ENCODE measurements at regions of chr1 and their contacts with region 1.

Region 1: GRCh38 chr1:7667625-7668218 is 103.4 kb upstream of the VAMP3 start:
- DNase-seq: peak; percentile 87
- CTCF ChIP-seq: peak; percentile 100

Region 2: DNA sequence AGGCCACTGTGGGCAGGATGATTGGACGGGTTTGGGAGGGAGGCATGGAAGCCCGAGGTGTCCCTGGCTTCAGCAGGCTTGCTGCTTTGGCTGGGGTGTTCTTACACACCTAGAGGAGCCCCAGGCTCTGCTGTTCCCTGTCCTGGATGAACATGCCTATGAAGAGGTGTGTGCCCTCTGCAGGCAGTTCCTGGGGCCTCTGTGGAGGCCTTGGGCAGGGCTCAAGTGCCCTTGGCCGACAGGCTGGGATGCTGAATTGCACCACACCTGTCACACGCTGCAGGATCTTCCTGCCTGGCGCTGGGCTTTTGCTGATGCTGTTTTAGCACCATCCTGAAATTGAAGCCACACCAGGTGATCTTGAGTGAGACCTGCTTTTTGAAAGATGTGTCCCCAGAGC is 311.6 kb before region 1 on chr1:
- CTCF ChIA-PET with region 1: no interaction called
- POLR2A ChIA-PET with region 1: no interaction called
- DNase-seq: no peak
- CTCF ChIP-seq: no peak

Region 3: DNA sequence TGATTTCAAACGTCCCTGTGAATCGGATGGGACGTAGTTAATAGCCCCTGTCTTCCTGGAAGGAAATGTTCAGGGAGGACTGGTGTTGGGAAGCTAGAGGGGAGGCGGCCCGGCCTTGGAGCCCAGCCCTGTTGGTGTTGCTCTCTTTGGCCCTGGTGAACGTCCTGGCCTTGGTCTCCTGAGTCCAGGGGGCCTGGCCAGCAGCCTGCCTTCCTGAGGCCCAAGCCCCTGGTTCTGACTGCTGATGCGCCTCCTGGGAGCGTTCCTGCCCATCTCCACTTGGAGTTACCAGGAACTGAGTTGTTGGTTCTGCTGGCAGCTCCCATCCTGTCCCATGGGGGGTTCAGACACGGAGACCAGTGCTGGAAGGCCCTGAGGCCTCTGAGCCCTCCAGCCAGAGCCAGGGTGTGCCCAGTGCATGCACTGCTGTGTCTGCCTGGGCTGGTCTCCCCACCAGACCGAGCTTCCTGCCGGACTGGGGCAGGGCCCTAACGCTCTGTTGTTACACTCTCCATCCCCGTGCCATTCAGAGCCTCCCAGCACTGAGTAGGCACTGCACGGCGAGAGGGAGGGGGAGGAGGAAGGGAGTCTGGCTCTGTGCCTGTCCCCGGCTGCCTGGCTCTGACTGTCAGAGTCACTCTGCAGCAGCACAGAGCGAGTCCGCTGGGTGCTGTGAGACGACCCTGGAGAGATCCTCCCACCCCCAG is 279.1 kb before region 1 on chr1:
- CTCF ChIA-PET with region 1: no interaction called
- POLR2A ChIA-PET with region 1: no interaction called
- DNase-seq: no peak
- CTCF ChIP-seq: no peak

Region 4: DNA sequence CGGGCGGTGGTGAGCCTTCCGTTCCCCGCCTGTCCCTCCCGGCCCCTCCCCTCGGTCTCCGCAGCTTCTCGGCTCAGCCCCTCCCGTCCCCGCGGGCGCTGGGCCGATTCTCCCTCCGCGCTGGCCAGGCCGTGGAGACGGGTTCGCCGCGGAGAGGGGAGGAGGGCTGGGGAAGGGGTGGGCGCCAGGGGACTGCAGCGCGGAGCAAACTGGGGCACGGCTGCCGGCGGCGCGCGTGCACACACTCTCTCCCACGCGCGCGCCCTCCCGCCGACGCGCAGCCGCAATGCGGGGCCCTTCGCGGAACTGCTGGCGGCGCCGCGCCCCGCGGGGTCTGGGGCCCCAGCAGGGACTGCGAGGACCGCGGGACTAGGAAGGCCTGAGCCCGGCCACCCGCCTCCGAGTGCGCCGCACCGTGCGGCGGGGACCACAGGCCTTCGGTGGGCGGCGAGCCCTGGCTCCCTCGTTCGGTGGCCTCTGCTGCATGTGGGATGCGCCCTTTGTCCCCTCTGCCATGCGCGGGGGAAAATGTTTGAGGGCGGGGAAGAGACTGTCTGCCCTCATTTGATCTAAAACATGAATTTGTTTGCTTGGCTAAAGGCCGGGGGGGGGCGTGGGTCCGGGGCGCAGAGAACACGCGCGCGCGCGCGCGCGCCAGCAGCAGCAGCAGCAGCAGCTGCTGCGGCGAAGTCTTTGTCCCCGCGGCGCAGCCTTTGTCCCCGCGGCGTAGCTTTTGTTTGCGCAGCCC is 12.7 kb after region 1 on chr1:
- CTCF ChIA-PET with region 1: interaction called, 92 read pairs
- POLR2A ChIA-PET with region 1: no interaction called
- DNase-seq: peak; percentile 49
- CTCF ChIP-seq: no peak

Region 5: DNA sequence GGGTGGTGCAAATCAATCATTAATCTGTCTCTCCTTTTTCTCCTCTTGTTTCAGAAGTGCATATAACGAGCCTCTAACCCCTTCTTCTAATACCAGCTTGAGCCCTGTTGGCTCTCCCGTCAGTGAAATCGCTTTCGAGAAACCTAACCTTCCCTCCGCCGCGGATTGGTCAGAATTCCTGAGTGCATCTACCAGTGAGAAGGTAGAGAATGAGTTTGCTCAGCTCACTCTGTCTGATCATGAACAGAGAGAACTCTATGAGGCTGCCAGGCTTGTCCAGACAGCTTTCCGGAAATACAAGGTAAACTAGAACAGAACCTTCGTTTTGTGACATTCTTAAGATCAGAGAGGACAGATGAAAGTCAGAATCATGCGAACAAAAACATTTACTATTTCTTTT is 78.1 kb after region 1 on chr1:
- CTCF ChIA-PET with region 1: interaction called, 296 read pairs
- POLR2A ChIA-PET with region 1: no interaction called
- DNase-seq: no peak
- CTCF ChIP-seq: no peak

Region 6: DNA sequence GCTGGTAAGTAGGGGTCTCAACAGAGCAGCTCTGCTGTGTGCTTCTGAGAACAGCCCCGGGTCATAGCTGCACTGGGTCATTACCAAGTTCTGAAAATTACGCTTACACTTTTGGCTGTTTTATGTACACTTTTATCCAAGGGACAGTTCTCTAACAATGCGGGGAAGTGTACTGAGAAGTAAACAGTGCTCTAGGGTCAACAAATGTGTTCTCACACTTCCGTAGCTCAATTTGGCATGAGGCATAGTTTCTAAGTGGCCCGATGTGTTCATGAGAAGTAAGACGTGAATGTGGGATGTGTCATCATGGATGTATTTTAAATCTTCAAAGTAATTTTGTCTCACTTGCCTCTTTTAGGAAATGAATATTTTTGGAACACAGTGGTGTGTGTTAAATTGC is 92.5 kb after region 1 on chr1:
- CTCF ChIA-PET with region 1: interaction called, 296 read pairs
- POLR2A ChIA-PET with region 1: no interaction called
- DNase-seq: no peak
- CTCF ChIP-seq: no peak

Region 7: GRCh38 chr1:8015036-8015808 is 347.5 kb after region 1 on chr1:
- CTCF ChIA-PET with region 1: interaction called, 10 read pairs
- POLR2A ChIA-PET with region 1: no interaction called
- DNase-seq: peak; percentile 54
- CTCF ChIP-seq: peak; percentile 63